Tibial artery (tissue), 4 donors: ENCODE measurements at regions of chr3 and their contacts with region 1.

Region 1: DNA sequence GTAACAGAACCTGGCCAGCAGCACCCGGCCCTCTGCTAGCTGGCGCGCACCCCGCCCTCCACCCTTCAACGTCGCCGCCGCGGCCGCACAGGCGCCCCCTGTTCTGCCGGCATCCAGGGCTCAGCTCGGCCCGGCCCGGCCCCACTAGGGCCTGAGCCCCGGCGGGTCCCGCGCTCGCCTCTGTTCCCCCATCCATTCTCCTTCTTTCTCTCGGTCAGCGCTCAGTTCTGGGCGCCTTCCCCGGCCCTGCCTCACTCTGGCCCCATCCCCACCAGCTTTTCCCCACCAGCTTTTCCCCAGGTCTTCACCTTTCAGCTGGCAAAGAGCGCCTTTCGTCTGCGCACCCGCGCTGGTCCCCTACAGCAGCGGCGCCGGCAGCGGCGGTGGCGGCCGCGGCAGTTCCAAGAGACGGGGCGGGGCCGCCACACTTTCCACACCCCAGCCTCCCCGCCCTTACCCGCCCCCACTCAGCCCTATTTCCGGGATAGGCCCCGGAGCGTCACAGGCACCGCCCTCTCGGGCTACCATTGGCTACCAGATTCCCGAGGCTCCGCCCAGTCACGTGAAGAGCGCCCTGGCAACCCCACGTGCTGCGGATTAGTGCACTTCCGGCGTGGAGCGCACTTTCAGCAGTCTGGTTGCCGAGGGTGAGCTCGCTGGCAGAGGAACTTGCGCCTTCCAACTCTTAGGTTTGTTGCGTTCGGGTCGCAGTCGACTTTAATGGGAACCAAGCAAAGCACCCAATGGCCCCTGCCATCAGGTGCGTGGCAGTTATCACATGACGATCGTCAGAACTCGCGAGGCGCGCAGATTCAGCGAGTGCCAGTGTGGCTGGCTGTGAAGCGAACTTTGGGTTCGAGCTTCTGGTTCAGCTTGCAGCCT is at the start of gene EIF5A2:
- DNase-seq: peak; percentile 96 to 97
- H3K4me3 ChIP-seq: peak within 1 kb of the TSS; percentile 74 to 82
- H3K27ac ChIP-seq: peak within 1 kb of the TSS; percentile 67 to 75
- H3K4me1 ChIP-seq: peaks cover 0 to 20% (median 10%) of the 10 kb centered on the region in 4 donors
- H3K27me3 ChIP-seq: no peaks in the 10 kb centered on the region
- CTCF ChIP-seq: no peak

Region 2: DNA sequence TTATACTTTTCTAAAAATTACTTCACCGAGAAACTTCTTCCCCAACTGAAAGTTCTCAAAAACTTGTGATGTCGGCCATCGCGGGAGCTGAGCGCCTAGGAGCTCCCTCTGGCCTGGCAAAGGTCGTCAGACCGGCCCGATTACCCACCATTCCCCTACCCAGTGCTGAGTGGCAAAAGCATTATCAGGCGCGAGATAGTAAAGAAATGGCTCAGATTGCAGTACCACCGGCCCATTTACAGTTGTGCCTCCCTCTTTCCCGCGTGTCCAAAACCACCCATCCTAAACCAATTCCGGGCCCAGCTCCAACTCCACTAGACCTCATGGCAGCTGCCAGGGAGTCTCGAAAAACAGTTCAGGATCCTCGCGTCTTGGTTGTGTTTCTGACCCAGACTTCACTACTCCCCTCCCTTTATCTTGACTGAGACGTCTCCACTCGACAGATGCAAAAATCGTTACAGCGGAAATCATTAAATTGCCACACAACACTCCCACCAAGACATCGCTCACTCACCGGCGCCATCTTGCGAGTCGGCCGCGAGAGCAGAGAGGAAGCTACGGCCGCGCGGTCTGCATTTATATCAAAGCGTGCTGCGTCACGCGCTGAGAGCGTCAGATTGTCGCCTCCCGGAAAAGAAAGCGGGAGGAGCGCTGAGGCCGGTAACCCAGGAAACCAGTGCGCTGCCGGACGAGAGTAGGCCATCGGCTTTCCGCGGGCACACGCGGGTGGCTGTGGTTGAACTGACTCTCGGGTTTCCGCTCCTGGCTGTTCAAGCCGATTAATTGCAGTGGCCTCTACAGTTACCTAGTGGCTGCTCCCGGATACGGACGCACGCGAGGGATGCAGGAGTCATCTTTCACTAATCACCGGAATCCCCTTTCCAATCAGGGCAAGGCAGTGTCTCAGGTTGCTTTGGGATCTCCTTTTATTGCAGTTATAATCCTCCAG is 38.6 kb before region 1 on chr3 and contains the start of gene RPL22L1:
- intact Hi-C with region 1: loop called (anchors 2 kb)
- DNase-seq: peak; percentile 93 to 96
- H3K4me3 ChIP-seq: peak within 1 kb of the TSS; percentile 70 to 76
- H3K27ac ChIP-seq: peak within 1 kb of the TSS; percentile 82 to 84
- H3K4me1 ChIP-seq: peaks cover 0 to 28% (median 8%) of the 10 kb centered on the region in 4 donors
- H3K27me3 ChIP-seq: no peaks in the 10 kb centered on the region
- CTCF ChIP-seq: no peak